B cell (primary cell): ENCODE measurements at regions of chr1 and their contacts with region 1.

Region 1: DNA sequence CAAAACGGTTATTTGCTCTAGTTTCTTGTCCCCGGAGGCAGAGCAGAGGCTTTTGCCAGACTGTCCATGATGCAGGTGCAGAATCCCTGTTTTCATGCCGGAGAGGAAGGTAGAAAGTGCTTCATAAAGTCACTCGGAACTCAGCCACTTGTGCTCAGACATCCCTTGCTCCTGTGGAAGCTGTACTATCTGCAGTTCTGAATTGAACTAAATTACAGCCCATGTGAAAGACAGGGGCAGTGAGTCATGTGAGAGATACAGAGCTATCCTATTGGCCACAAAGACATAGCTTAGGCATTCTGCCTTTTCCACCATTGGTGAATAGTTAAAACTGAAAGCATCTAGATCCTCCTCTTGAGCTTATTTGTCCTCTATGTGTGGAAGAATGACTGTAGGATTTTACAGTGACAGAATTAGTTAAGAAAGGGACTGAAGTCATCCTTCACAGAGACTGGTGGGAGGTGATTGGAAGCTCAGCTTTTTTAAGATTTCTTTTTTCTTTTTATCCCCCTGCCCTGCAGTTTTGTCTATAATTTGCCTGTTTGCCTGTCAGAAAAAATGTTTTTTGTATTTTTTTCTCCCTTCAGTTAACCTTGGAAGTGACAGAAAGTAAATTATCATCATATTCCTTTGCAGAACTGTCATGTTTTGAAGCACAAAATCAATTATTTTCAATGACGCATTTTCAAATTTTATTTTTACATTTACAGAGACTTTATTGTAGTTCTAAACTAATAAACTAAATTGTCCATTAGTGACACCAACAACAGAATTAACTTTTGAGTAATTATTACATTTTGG is 298.6 kb downstream of the PTPRC start:
- DNase-seq: peak; percentile 76
- ATAC-seq: peak; percentile 92
- H3K4me3 ChIP-seq: peak overlapping the region; percentile 55 to 92 (median 71)
- H3K4me3 Mint-ChIP-seq: peak overlapping the region; percentile 91
- H3K27ac ChIP-seq: peak overlapping the region; percentile 45 to 70
- H3K27ac Mint-ChIP-seq: peak overlapping the region; percentile 69
- H3K4me1 ChIP-seq: peaks cover 10 to 33% of the 10 kb centered on the region in 2 donors
- H3K4me1 Mint-ChIP-seq: peaks cover 35% of the 10 kb centered on the region
- H3K27me3 ChIP-seq: peaks cover 0 to 5% (median 0%) of the 10 kb centered on the region in 4 experiments
- H3K27me3 Mint-ChIP-seq: no peaks in the 10 kb centered on the region
- CTCF ChIP-seq: no peak

Region 2: GRCh38 chr1:198858033-198858432 is 79.4 kb before region 1 on chr1:
- CTCF ChIA-PET with region 1: no interaction called
- POLR2A ChIA-PET with region 1: no interaction called
- intact Hi-C with region 1: no loop called
- DNase-seq: no peak
- ATAC-seq: no peak
- H3K4me3 ChIP-seq: no peak overlapping the region
- H3K4me3 Mint-ChIP-seq: no peak overlapping the region
- H3K27ac ChIP-seq: no peak overlapping the region
- H3K27ac Mint-ChIP-seq: no peak overlapping the region
- H3K4me1 ChIP-seq: no peaks in the 10 kb centered on the region
- H3K4me1 Mint-ChIP-seq: no peaks in the 10 kb centered on the region
- H3K27me3 ChIP-seq: no peaks in the 10 kb centered on the region
- H3K27me3 Mint-ChIP-seq: no peaks in the 10 kb centered on the region
- CTCF ChIP-seq: no peak

Region 3: GRCh38 chr1:198922638-198923430 is 14.6 kb before region 1 on chr1:
- CTCF ChIA-PET with region 1: no interaction called
- POLR2A ChIA-PET with region 1: no interaction called
- intact Hi-C with region 1: loop called (anchors 2 kb)
- DNase-seq: peak; percentile 52
- ATAC-seq: peak; percentile 33
- H3K4me3 ChIP-seq: no peak overlapping the region
- H3K4me3 Mint-ChIP-seq: peak overlapping the region; percentile 64
- H3K27ac ChIP-seq: no peak overlapping the region
- H3K27ac Mint-ChIP-seq: peak overlapping the region; percentile 70
- H3K4me1 ChIP-seq: peaks cover 18 to 28% of the 10 kb centered on the region in 2 donors
- H3K4me1 Mint-ChIP-seq: peaks cover 53% of the 10 kb centered on the region
- H3K27me3 ChIP-seq: no peaks in the 10 kb centered on the region
- H3K27me3 Mint-ChIP-seq: no peaks in the 10 kb centered on the region
- CTCF ChIP-seq: no peak

Region 4: GRCh38 chr1:198947445-198947844 is 10.0 kb after region 1 on chr1:
- CTCF ChIA-PET with region 1: no interaction called
- POLR2A ChIA-PET with region 1: no interaction called
- intact Hi-C with region 1: loop called (anchors 2 kb)
- DNase-seq: no peak
- ATAC-seq: no peak
- H3K4me3 ChIP-seq: no peak overlapping the region
- H3K4me3 Mint-ChIP-seq: no peak overlapping the region
- H3K27ac ChIP-seq: no peak overlapping the region
- H3K27ac Mint-ChIP-seq: no peak overlapping the region
- H3K4me1 ChIP-seq: no peaks in the 10 kb centered on the region
- H3K4me1 Mint-ChIP-seq: no peaks in the 10 kb centered on the region
- H3K27me3 ChIP-seq: no peaks in the 10 kb centered on the region
- H3K27me3 Mint-ChIP-seq: no peaks in the 10 kb centered on the region
- CTCF ChIP-seq: no peak

Region 5: DNA sequence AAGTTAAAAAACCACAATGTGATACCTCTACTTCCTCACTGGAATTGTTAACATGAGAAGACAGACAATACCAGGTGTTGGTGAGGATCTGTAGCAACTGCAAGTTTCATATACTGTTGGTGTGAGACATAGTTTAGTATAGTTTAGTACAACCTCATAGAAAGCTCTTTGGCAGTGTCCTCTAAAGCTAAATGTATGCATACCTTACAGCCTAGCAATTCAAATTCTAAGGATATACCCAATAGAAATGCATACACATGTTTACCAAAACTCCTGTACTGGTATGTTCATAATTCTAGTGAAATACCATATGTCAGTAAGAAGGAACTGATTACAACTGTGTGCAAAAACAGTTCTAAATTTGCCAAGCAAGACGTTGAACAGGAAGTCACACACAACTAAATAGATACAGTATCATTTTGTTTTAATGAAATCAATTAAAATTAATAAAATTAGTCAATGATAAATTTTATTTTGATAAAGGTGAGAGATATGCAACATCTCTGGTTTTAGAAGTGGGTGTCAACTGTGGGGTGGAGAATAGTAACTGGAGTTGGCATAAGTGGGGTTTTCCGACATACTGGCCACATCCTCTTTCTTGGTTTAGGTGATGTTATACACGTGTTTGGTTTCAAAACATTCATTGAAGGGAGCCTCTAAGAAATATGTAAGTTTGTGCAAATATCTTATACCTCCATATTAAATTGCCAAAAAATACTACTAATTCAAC is 152.1 kb after region 1 on chr1:
- CTCF ChIA-PET with region 1: no interaction called
- POLR2A ChIA-PET with region 1: no interaction called
- intact Hi-C with region 1: loop called (anchors 5 kb)
- DNase-seq: peak; percentile 81
- ATAC-seq: peak; percentile 95
- H3K4me3 ChIP-seq: peak overlapping the region in 1 of 5 experiments; percentile 18
- H3K4me3 Mint-ChIP-seq: peak overlapping the region; percentile 46
- H3K27ac ChIP-seq: peak overlapping the region; percentile 54 to 73
- H3K27ac Mint-ChIP-seq: peak overlapping the region; percentile 75
- H3K4me1 ChIP-seq: peaks cover 17 to 32% of the 10 kb centered on the region in 2 donors
- H3K4me1 Mint-ChIP-seq: peaks cover 29% of the 10 kb centered on the region
- H3K27me3 ChIP-seq: no peaks in the 10 kb centered on the region
- H3K27me3 Mint-ChIP-seq: no peaks in the 10 kb centered on the region
- CTCF ChIP-seq: no peak

Region 6: GRCh38 chr1:199490804-199491527 is 553.5 kb after region 1 on chr1:
- CTCF ChIA-PET with region 1: no interaction called
- POLR2A ChIA-PET with region 1: no interaction called
- intact Hi-C with region 1: loop called (anchors 5 kb)
- DNase-seq: no peak
- ATAC-seq: no peak
- H3K4me3 ChIP-seq: no peak overlapping the region
- H3K4me3 Mint-ChIP-seq: no peak overlapping the region
- H3K27ac ChIP-seq: no peak overlapping the region
- H3K27ac Mint-ChIP-seq: peak overlapping the region; percentile 41
- H3K4me1 ChIP-seq: peaks cover 10 to 17% of the 10 kb centered on the region in 2 donors
- H3K4me1 Mint-ChIP-seq: peaks cover 34% of the 10 kb centered on the region
- H3K27me3 ChIP-seq: no peaks in the 10 kb centered on the region
- H3K27me3 Mint-ChIP-seq: no peaks in the 10 kb centered on the region
- CTCF ChIP-seq: no peak